ENCODE measurements at regions of chr7 and their contacts with region 1.

Region 1: DNA sequence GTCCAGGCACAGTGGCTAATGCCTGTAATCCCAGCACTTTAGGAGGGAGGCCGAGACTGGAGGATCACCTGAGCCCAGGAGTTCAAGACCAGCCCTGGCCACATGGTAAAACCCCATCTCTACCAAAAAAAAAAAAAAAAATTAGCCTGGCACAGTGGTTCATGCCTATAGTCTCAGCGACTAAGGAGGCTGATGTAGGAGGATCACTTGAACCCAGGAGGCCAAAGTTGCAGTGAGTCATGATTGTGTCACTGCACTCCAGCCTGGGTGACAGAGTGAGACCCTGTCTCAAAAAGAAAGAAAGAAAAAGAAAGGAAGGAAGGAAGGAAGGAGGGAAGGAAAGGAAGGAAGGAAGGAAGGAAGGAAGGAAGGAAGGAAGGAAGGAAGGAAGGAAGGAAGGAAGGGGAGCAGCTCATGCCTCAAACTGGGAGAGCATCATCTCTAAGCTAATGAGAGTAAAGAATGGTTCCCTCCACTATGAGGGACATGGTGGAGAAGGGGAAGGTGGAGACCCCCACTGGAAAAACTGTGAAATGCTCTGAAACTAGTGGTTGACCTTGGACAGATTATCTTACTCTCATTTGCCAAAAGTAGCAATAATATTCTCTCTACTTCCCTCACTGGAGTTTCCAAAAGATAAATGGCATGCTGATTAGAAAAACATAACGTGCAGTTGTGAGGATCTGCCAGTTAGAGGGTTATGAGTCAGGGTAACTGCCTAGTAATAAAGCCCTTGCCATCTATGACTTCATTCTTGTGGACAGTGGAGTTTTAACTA is 16.8 kb downstream of the GIMAP5 start:
- DNase-seq: peak in 1 of 10 donors; percentile 60
- ATAC-seq: peak in 1 of 2 donors; percentile 10
- H3K4me3 Mint-ChIP-seq: peak overlapping the region in 9 of 10 donors; percentile 36 to 78 (median 63)
- H3K27ac Mint-ChIP-seq: peak overlapping the region; percentile 66 to 97 (median 94)
- H3K4me1 Mint-ChIP-seq: peaks cover 35 to 77% (median 71%) of the 10 kb centered on the region in 4 donors
- H3K27me3 Mint-ChIP-seq: peaks cover 0 to 2% (median 0%) of the 10 kb centered on the region in 5 donors

Region 2: GRCh38 chr7:150520145-150520544 is 233.9 kb before region 1 on chr7:
- POLR2A ChIA-PET with region 1: interaction called, 44 read pairs
- DNase-seq: peak in 4 of 10 donors; percentile 27 to 70 (median 36)
- ATAC-seq: peak; percentile 19 to 26
- H3K4me3 Mint-ChIP-seq: peak overlapping the region; percentile 91 to 100 (median 99)
- H3K27ac Mint-ChIP-seq: peak overlapping the region; percentile 87 to 99 (median 94)
- H3K4me1 Mint-ChIP-seq: peaks cover 16 to 43% (median 35%) of the 10 kb centered on the region in 4 donors
- H3K27me3 Mint-ChIP-seq: no peaks in the 10 kb centered on the region

Region 3: GRCh38 chr7:150675714-150676113 is 78.3 kb before region 1 on chr7:
- POLR2A ChIA-PET with region 1: interaction called, 15 read pairs
- DNase-seq: no peak
- ATAC-seq: no peak
- H3K4me3 Mint-ChIP-seq: peak overlapping the region; percentile 16 to 81 (median 61)
- H3K27ac Mint-ChIP-seq: peak overlapping the region; percentile 91 to 99 (median 95)
- H3K4me1 Mint-ChIP-seq: peaks cover 24 to 80% (median 77%) of the 10 kb centered on the region in 4 donors
- H3K27me3 Mint-ChIP-seq: no peaks in the 10 kb centered on the region

Region 4: GRCh38 chr7:150703209-150703608 is 50.8 kb before region 1 on chr7:
- POLR2A ChIA-PET with region 1: no interaction called
- DNase-seq: no peak
- ATAC-seq: no peak
- H3K4me3 Mint-ChIP-seq: no peak overlapping the region
- H3K27ac Mint-ChIP-seq: peak overlapping the region in 1 of 10 donors; percentile 23
- H3K4me1 Mint-ChIP-seq: peaks cover 0 to 11% (median 3%) of the 10 kb centered on the region in 4 donors
- H3K27me3 Mint-ChIP-seq: no peaks in the 10 kb centered on the region

Region 5: DNA sequence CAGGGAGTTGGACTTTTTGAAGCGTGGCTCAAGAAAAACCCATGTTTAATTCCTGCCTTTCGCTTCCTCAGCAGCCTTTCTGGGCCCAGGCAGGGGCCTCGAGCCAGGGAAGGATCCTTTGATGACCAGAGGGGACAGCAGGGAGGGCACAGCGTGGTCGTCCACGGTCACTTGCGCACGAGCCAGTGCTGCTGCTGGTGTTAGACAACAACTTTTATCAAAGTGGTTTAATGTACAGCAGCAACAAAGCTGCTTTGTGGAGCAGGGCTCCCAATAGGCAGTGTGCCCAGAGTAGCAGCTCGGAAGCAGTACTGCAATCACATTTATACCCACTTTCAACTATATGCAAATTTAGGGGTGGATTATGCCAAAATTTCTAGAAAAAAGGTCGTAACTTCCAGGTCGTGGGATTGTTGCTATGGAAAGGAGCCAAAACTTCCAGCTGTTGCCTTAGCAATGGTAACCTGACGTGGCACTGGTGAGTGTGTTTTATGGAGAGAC is 31.5 kb before region 1 on chr7:
- POLR2A ChIA-PET with region 1: interaction called, 234 read pairs
- DNase-seq: no peak
- ATAC-seq: peak; percentile 38 to 39
- H3K4me3 Mint-ChIP-seq: peak overlapping the region; percentile 68 to 97 (median 86)
- H3K27ac Mint-ChIP-seq: peak overlapping the region; percentile 85 to 96 (median 92)
- H3K4me1 Mint-ChIP-seq: peaks cover 41 to 81% (median 79%) of the 10 kb centered on the region in 4 donors
- H3K27me3 Mint-ChIP-seq: no peaks in the 10 kb centered on the region

Region 6: DNA sequence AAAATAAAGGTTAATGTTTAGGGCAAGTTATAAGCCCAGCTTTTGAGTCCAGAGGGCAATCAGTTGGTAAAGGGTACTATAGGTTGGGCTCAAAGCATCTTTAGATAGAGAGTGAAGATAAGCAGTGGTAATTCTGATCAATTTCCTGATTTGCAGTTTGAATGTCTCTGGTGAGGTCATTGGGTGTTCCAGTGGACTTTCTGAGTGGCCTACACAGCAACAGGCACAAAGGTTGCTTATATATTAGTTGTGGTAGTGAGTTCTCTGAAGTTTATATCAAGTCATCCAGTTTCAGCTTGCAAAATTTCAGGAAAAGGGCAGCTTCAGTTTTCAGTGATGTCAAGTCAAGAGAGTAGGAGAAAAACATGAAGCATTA is 12.3 kb after region 1 on chr7:
- POLR2A ChIA-PET with region 1: no interaction called
- DNase-seq: no peak
- ATAC-seq: no peak
- H3K4me3 Mint-ChIP-seq: no peak overlapping the region
- H3K27ac Mint-ChIP-seq: peak overlapping the region in 1 of 10 donors; percentile 9
- H3K4me1 Mint-ChIP-seq: peaks cover 0 to 2% (median 0%) of the 10 kb centered on the region in 4 donors
- H3K27me3 Mint-ChIP-seq: no peaks in the 10 kb centered on the region